Activated CD4-positive, alpha-beta memory T cell treated with anti-CD3 and anti-CD28 coated beads for 36 hours (primary cell): ENCODE measurements at regions of chr2 and their contacts with region 1.

Region 1: GRCh38 chr2:55519938-55520885 is 694 bp downstream of the CFAP36 start:
- DNase-seq: peak; percentile 55
- H3K4me3 Mint-ChIP-seq: peak overlapping the region; percentile 99
- H3K27ac Mint-ChIP-seq: peak overlapping the region; percentile 95
- H3K4me1 Mint-ChIP-seq: peaks cover 9% of the 10 kb centered on the region
- H3K27me3 Mint-ChIP-seq: no peaks in the 10 kb centered on the region

Region 2: DNA sequence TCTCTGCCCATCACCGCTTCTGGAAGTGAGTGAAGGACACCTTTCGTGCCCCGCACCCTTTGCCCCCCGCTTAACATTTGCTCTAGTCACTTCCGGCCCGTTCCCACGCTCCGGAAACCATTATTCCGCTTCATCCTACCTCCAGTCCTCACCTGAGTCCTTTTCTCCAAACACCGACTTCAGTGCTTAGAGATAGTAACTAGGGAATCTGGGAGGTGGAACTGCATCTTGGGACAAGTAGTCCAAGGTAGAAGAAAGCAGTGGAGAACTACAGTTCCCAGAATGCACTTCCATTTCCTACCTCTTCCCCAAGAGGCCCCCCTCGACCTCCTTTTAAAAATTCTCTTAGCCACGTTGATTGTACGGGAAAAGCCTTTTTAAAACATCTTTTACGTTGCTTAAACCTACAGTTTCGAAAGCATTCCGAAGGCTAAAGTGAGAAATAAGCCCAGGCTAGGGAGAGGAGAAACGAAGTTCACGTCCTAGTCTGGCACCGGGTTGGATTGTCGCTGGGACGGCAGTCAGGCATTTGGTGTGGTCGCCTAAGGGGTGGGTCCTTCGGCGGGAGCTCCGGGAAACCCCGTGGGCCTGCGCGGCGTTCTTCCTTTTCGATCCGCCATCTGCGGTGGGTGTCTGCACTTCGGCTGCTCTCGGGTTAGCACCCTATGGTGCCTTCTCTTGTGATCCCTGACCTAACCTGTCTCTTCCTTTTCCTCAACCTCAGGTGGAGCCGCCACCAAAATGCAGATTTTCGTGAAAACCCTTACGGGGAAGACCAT is 287.9 kb before region 1 on chr2 and contains the starts of genes CLHC1 and RPS27A:
- CTCF ChIA-PET with region 1: no interaction called
- POLR2A ChIA-PET with region 1: no interaction called
- intact Hi-C with region 1: loop called (anchors 1 kb)
- DNase-seq: peak; percentile 95
- H3K4me3 Mint-ChIP-seq: peak within 1 kb of the TSS; percentile 96
- H3K27ac Mint-ChIP-seq: peak within 1 kb of the TSS; percentile 94
- H3K4me1 Mint-ChIP-seq: peaks cover 60% of the 10 kb centered on the region
- H3K27me3 Mint-ChIP-seq: no peaks in the 10 kb centered on the region
- total RNA-seq, gene CLHC1: 5.5 to 7.5 TPM
- total RNA-seq, gene RPS27A: 1,372 to 1,402 TPM

Region 3: GRCh38 chr2:55282110-55282917 is 237.9 kb before region 1 on chr2:
- CTCF ChIA-PET with region 1: no interaction called
- POLR2A ChIA-PET with region 1: no interaction called
- intact Hi-C with region 1: loop called (anchors 5 kb)
- DNase-seq: peak; percentile 90
- H3K4me3 Mint-ChIP-seq: peak overlapping the region; percentile 84
- H3K27ac Mint-ChIP-seq: peak overlapping the region; percentile 91
- H3K4me1 Mint-ChIP-seq: peaks cover 22% of the 10 kb centered on the region
- H3K27me3 Mint-ChIP-seq: no peaks in the 10 kb centered on the region

Region 4: DNA sequence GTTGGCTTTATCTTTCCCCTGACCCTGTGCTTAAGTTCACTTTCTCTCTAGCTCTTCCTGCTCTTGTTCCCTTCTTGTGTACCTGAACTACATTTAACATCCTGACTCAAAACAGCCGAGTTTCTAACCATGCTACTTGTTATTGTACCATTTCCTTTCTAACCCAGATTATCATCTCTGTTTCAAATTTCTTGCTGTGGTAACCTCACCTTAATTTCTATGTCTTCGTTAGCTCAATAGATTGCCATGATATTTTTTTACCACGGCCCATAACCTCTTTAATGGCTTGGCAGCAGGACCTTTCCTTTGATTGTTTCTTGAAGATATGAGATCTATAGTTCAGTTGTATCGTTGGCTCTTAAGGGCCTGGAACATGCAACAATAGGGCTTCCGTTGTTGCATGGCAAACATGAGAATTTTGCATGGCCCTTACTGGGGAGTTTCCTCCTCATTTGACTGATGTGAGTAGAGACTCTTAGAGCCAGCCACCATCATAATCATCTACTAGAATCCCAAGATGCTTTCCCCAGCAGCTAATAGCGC is 10.4 kb after region 1 on chr2:
- CTCF ChIA-PET with region 1: interaction called, 3 read pairs
- POLR2A ChIA-PET with region 1: interaction called, 11 read pairs
- intact Hi-C with region 1: loop called (anchors 1 kb)
- DNase-seq: peak; percentile 30
- H3K4me3 Mint-ChIP-seq: peak overlapping the region; percentile 1
- H3K27ac Mint-ChIP-seq: peak overlapping the region; percentile 83
- H3K4me1 Mint-ChIP-seq: peaks cover 22% of the 10 kb centered on the region
- H3K27me3 Mint-ChIP-seq: no peaks in the 10 kb centered on the region

Region 5: DNA sequence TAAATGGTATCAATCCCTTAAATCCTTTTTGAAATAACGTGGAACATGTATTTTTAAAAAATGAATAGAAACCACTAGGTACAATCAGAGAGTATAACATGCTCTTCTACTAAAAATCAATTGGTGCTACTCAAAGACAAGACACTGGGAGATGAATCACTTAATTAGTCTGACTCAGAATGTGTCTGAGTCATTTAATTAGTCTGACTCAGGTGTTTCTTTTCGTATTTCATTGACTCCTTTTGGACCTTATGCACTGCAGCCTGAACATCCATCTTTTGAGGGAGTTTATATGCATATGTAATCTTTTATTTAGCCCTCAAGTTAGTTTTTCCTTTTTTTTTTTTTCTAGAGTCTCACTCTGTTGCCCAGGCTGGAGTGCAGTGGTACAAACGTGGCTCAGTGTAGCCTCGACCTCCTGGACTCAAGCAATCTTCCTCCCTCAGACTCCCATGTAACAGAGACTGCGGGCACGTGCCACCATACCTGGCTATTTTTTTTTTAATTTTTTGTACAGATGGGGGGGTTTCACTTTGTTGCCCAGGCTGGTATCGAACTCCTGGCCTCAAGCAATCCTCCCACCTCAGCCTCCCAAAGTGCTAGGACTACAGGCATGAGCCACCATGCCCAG is 70.7 kb after region 1 on chr2:
- CTCF ChIA-PET with region 1: no interaction called
- POLR2A ChIA-PET with region 1: no interaction called
- intact Hi-C with region 1: loop called (anchors 1 kb)
- DNase-seq: no peak
- H3K4me3 Mint-ChIP-seq: no peak overlapping the region
- H3K27ac Mint-ChIP-seq: peak overlapping the region; percentile 33
- H3K4me1 Mint-ChIP-seq: peaks cover 32% of the 10 kb centered on the region
- H3K27me3 Mint-ChIP-seq: no peaks in the 10 kb centered on the region

Region 6: GRCh38 chr2:55693181-55694134 is 173.2 kb after region 1 on chr2 and contains the start of gene PNPT1:
- CTCF ChIA-PET with region 1: no interaction called
- POLR2A ChIA-PET with region 1: interaction called, 3 read pairs
- intact Hi-C with region 1: loop called (anchors 1 kb)
- DNase-seq: peak; percentile 97
- H3K4me3 Mint-ChIP-seq: peak within 1 kb of the TSS; percentile 98
- H3K27ac Mint-ChIP-seq: peak within 1 kb of the TSS; percentile 90
- H3K4me1 Mint-ChIP-seq: peaks cover 35% of the 10 kb centered on the region
- H3K27me3 Mint-ChIP-seq: no peaks in the 10 kb centered on the region
- total RNA-seq, gene PNPT1: 44.0 to 48.4 TPM